ENCODE measurements at regions of chr22 and their contacts with region 1.

Region 1: GRCh38 chr22:20393909-20394691 is at the start of gene ZNF74:
- DNase-seq: peak; percentile 86
- H3K4me3 Mint-ChIP-seq: peak within 1 kb of the TSS; percentile 78
- H3K27ac Mint-ChIP-seq: peak within 1 kb of the TSS; percentile 51
- H3K4me1 Mint-ChIP-seq: peaks cover 18% of the 10 kb centered on the region
- H3K27me3 Mint-ChIP-seq: no peaks in the 10 kb centered on the region
- CTCF ChIP-seq: no peak
- total RNA-seq, gene ZNF74: 9.9 and 10.4 TPM in 2 replicates

Region 2: GRCh38 chr22:19663286-19663815 is 730.7 kb before region 1 on chr22:
- CTCF ChIA-PET with region 1: no interaction called
- POLR2A ChIA-PET with region 1: no interaction called
- intact Hi-C with region 1: no loop called
- DNase-seq: peak; percentile 62
- H3K4me3 Mint-ChIP-seq: no peak overlapping the region
- H3K27ac Mint-ChIP-seq: peak overlapping the region; percentile 54
- H3K4me1 Mint-ChIP-seq: peaks cover 14% of the 10 kb centered on the region
- H3K27me3 Mint-ChIP-seq: peaks cover 14% of the 10 kb centered on the region
- CTCF ChIP-seq: no peak

Region 3: GRCh38 chr22:20319745-20320658 is 74.1 kb before region 1 on chr22 and contains the start of gene DGCR6L:
- CTCF ChIA-PET with region 1: interaction called, 6 read pairs
- POLR2A ChIA-PET with region 1: interaction called, 16 read pairs
- intact Hi-C with region 1: no loop called
- DNase-seq: peak; percentile 94
- H3K4me3 Mint-ChIP-seq: peak within 1 kb of the TSS; percentile 88
- H3K27ac Mint-ChIP-seq: peak within 1 kb of the TSS; percentile 75
- H3K4me1 Mint-ChIP-seq: peaks cover 7% of the 10 kb centered on the region
- H3K27me3 Mint-ChIP-seq: no peaks in the 10 kb centered on the region
- CTCF ChIP-seq: no peak
- total RNA-seq, gene DGCR6L: 33.3 and 36.4 TPM in 2 replicates

Region 4: GRCh38 chr22:20380486-20380885 is 13.6 kb before region 1 on chr22:
- CTCF ChIA-PET with region 1: no interaction called
- POLR2A ChIA-PET with region 1: interaction called, 10 read pairs
- intact Hi-C with region 1: no loop called
- DNase-seq: peak; percentile 61
- H3K4me3 Mint-ChIP-seq: no peak overlapping the region
- H3K27ac Mint-ChIP-seq: no peak overlapping the region
- H3K4me1 Mint-ChIP-seq: no peaks in the 10 kb centered on the region
- H3K27me3 Mint-ChIP-seq: peaks cover 16% of the 10 kb centered on the region
- CTCF ChIP-seq: no peak

Measured in MCF 10A (cell line).